WTC11 (cell line): ENCODE measurements at regions of chr6 and their contacts with region 1.

Region 1: GRCh38 chr6:44475779-44476434 is 88.4 kb downstream of the CDC5L start:
- DNase-seq: peak; percentile 92
- ATAC-seq: peak; percentile 83
- H3K4me3 Mint-ChIP-seq: no peak overlapping the region
- H3K27ac Mint-ChIP-seq: no peak overlapping the region
- H3K4me1 Mint-ChIP-seq: peaks cover 41% of the 10 kb centered on the region
- H3K27me3 Mint-ChIP-seq: peaks cover 2% of the 10 kb centered on the region; the same call in 1 of the 2 replicates
- CTCF ChIP-seq: peak; percentile 89

Region 2: GRCh38 chr6:44456070-44456965 is 19.6 kb before region 1 on chr6:
- CTCF ChIA-PET with region 1: interaction called, 17 read pairs
- POLR2A ChIA-PET with region 1: no interaction called
- DNase-seq: no peak
- ATAC-seq: peak; percentile 82
- H3K4me3 Mint-ChIP-seq: no peak overlapping the region
- H3K27ac Mint-ChIP-seq: no peak overlapping the region
- H3K4me1 Mint-ChIP-seq: no peaks in the 10 kb centered on the region
- H3K27me3 Mint-ChIP-seq: no peaks in the 10 kb centered on the region; the same call in 1 of the 2 replicates
- CTCF ChIP-seq: peak; percentile 76

Region 3: DNA sequence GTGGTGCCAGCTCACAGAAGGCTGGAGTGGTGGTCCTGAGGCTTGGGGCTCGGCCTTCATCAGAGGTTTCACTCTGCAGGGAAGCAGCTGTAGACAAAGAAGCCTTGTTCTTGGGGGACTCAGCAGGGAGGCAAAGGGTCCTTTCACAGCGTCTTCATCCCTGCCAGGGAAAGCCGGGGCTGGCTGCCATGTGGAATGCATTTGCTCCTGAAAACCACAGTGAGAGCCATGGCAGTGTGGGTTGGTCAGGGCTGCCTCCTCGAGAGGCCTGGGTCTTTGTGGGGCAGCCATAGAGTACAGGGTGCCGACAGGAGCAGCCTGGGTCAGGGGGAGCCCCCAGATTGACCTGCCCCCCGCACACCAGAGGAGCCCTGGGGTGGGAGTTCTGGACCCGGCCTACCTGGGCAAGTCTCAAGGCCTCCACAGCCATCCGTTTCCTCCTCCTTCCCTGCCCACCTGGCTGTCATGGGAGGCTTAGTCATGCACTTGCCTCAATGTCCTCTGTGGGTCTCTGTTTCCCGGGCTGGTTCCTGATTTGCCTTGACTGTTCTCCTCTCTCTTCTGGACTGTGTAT is 55.6 kb after region 1 on chr6:
- CTCF ChIA-PET with region 1: interaction called, 10 read pairs
- POLR2A ChIA-PET with region 1: no interaction called
- DNase-seq: no peak
- ATAC-seq: no peak
- H3K4me3 Mint-ChIP-seq: no peak overlapping the region
- H3K27ac Mint-ChIP-seq: no peak overlapping the region; the same call in 1 of the 2 replicates
- H3K4me1 Mint-ChIP-seq: peaks cover 20% of the 10 kb centered on the region
- H3K27me3 Mint-ChIP-seq: no peaks in the 10 kb centered on the region; the same call in 1 of the 2 replicates
- CTCF ChIP-seq: no peak

Region 4: GRCh38 chr6:44593539-44593944 is 117.6 kb after region 1 on chr6:
- CTCF ChIA-PET with region 1: interaction called, 84 read pairs
- POLR2A ChIA-PET with region 1: interaction called, 4 read pairs
- DNase-seq: peak; percentile 81
- ATAC-seq: peak; percentile 93
- H3K4me3 Mint-ChIP-seq: no peak overlapping the region
- H3K27ac Mint-ChIP-seq: 0 out of 2 replicates have a peak overlapping the region, but pooled peaks have one; percentile 62
- H3K4me1 Mint-ChIP-seq: peaks cover 9% of the 10 kb centered on the region
- H3K27me3 Mint-ChIP-seq: peaks cover 6% of the 10 kb centered on the region; the same call in 1 of the 2 replicates
- CTCF ChIP-seq: peak; percentile 60

Region 5: DNA sequence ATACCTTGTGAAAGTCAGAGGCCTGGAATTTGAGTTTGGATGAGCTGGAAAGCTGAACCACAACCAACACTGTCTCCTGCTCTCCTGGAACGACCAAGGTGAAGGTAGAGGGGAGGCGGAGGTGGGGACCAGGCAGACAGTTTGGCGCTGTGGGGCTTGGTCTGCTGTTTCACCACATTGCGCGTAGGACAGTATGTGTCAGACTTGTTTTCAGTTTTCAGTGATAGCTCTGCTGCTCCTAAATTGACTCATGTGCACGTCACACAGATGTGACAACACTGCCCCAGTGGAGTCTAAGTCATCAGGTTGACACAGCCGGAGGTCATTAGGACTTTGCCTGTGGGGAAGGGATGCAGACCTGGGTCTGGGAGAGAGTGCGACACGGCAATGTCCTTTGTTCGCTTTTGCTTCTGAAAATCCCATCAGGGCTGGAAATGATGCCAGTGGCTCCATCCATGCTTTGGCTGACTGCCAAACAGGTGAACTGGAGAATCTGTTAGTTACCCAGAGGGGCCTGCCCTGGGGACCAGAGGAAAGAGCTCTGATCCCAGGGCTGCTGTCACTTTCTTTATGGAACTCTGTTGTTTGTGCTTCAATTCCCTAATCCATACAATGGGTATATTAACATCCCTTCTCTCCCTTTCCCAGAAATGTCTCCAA is 167.1 kb after region 1 on chr6:
- CTCF ChIA-PET with region 1: interaction called, 36 read pairs
- POLR2A ChIA-PET with region 1: no interaction called
- DNase-seq: no peak
- ATAC-seq: no peak
- H3K4me3 Mint-ChIP-seq: no peak overlapping the region
- H3K27ac Mint-ChIP-seq: no peak overlapping the region
- H3K4me1 Mint-ChIP-seq: no peaks in the 10 kb centered on the region
- H3K27me3 Mint-ChIP-seq: peaks cover under 1% of the 10 kb centered on the region
- CTCF ChIP-seq: no peak

Region 6: DNA sequence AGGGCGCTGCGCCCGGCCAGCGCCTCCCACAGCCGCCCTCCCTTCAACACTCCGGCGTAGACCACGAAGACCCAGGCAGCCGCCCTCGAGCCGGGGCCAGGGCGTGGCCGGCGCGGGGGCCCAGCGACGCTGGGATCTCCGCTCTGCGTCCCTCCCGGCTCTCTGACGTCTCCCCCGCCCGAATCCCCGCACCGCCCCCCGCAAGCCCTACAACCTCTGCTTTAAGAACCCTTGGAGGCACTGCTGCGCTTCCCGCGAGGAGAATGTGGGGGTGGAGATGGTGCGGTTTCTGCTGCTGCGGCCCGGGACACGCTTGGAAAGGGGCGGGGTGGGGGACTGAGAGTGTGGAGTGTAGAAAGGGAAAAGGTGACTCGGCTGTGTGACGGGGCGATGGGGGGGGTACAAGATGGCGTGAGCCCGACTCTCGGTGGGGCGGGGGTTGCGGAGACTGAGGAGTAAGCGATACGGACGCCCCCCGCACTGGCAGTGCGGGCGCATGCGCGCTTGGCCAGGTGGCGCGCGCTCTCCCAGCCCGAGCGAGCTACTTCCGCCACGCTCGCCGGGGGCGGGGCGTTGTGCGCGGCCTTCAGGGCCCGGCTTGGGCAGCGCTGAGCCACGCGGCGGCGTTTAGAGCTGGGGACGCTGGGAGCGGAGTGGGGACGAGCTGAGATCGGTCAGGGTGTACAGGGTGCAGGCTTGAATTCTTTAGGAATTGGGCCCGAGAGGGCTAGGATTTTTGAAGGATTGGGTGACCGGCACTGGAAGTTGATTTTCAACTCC is 901.8 kb after region 1 on chr6 and contains the start of gene SUPT3H:
- CTCF ChIA-PET with region 1: interaction called, 13 read pairs
- POLR2A ChIA-PET with region 1: no interaction called
- DNase-seq: peak; percentile 87
- ATAC-seq: peak; percentile 92
- H3K4me3 Mint-ChIP-seq: peak within 1 kb of the TSS; percentile 92
- H3K27ac Mint-ChIP-seq: peak within 1 kb of the TSS; percentile 98
- H3K4me1 Mint-ChIP-seq: peaks cover 17% of the 10 kb centered on the region
- H3K27me3 Mint-ChIP-seq: no peaks in the 10 kb centered on the region; the same call in 1 of the 2 replicates
- CTCF ChIP-seq: no peak
- total RNA-seq, gene SUPT3H: 15.3 to 21.9 TPM (median 19.2 TPM) in 3 replicates

Region 7: GRCh38 chr6:45930420-45931040 is 1454.6 kb after region 1 on chr6:
- CTCF ChIA-PET with region 1: interaction called, 10 read pairs
- POLR2A ChIA-PET with region 1: no interaction called
- DNase-seq: peak; percentile 77
- ATAC-seq: peak; percentile 28; the same call in 1 of the 2 replicates
- H3K4me3 Mint-ChIP-seq: no peak overlapping the region
- H3K27ac Mint-ChIP-seq: no peak overlapping the region
- H3K4me1 Mint-ChIP-seq: peaks cover 61% of the 10 kb centered on the region
- H3K27me3 Mint-ChIP-seq: peaks cover 19% of the 10 kb centered on the region
- CTCF ChIP-seq: peak; percentile 84